ENCODE measurements at regions of chr2 and their contacts with region 1.

Region 1: GRCh38 chr2:203782262-203782976 is 76.0 kb downstream of the CD28 start:
- DNase-seq: peak; percentile 69
- H3K4me3 Mint-ChIP-seq: no peak overlapping the region
- H3K27ac Mint-ChIP-seq: no peak overlapping the region
- H3K4me1 Mint-ChIP-seq: peaks cover 47% of the 10 kb centered on the region
- H3K27me3 Mint-ChIP-seq: no peaks in the 10 kb centered on the region

Region 2: GRCh38 chr2:203683932-203684556 is 98.4 kb before region 1 on chr2:
- CTCF ChIA-PET with region 1: no interaction called
- DNase-seq: no peak
- H3K4me3 Mint-ChIP-seq: no peak overlapping the region
- H3K27ac Mint-ChIP-seq: no peak overlapping the region
- H3K4me1 Mint-ChIP-seq: peaks cover 31% of the 10 kb centered on the region
- H3K27me3 Mint-ChIP-seq: no peaks in the 10 kb centered on the region

Region 3: GRCh38 chr2:203799908-203800307 is 17.5 kb after region 1 on chr2:
- CTCF ChIA-PET with region 1: interaction called, 16 read pairs
- DNase-seq: no peak
- H3K4me3 Mint-ChIP-seq: no peak overlapping the region
- H3K27ac Mint-ChIP-seq: no peak overlapping the region
- H3K4me1 Mint-ChIP-seq: peaks cover 45% of the 10 kb centered on the region
- H3K27me3 Mint-ChIP-seq: no peaks in the 10 kb centered on the region

Measured in activated naive CD4-positive, alpha-beta T cell treated with anti-CD3 and anti-CD28 coated beads, Interleukin-2, amount 10 ng/mL, durations not matched to agents 7 days and 5 days (primary cell).